MCF 10A (cell line): ENCODE measurements at regions of chr17 and their contacts with region 1.

Region 1: DNA sequence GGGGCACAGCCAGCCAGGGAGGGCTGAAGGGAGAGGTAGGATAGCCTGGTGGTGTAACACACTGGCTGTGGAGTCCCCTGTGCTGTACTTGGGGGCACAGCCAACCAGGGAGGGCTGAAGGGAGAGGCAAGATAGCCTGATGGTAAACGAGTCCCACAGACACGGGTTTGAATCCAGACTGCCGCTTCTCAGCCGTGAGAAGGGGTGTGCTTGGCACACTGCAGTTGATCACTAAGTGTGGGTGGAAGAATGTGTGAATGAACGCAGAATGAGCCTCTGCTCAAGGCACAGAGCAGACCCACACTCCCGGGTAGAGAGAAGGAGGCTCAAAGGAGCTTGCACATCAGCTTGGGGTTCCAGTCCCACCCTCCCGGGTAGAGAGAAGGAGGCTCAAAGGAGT is 71.4 kb downstream of the TIMM22 start:
- DNase-seq: no peak
- H3K4me3 Mint-ChIP-seq: no peak overlapping the region
- H3K27ac Mint-ChIP-seq: no peak overlapping the region
- H3K4me1 Mint-ChIP-seq: peaks cover 8% of the 10 kb centered on the region
- H3K27me3 Mint-ChIP-seq: no peaks in the 10 kb centered on the region
- CTCF ChIP-seq: no peak

Region 2: DNA sequence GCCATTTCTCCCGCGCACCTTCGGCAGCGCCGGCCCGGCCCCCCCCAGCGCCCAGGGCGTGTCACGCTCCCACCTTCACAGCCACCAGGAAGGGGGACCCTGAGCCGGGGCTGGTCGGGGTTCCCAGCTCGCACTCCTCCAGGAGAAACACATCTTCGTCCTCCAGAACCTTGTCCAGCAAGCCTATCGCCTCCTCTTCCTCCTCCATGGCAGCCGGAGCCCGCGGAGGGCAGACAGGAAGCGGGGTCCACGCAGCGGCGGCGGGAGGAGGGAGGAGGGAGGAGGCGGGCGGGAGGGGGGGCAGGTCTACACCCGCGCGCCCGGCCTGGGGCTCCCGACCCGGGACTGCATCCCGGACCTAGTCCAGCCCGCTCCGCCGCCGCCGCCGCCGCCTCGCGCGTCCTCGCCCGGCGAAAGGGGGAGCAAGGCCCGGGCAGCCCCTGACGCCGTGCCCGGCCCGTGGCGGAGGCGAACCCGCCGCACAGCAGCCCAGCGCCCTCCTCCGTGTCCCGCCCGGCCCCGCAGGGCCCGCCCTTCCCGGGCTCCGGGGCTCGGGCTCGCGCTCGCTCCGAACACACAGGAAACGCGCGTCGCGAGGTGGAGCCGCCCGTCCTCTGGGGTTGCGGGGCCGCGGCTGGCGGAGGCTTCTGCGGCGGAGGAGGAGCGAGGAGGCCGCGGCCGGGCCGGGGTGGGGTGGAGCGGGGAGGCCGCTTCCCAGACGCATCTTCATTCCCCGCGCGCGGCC is 40.7 kb after region 1 on chr17:
- CTCF ChIA-PET with region 1: interaction called, 3 read pairs
- POLR2A ChIA-PET with region 1: no interaction called
- intact Hi-C with region 1: loop called (anchors 2 kb)
- DNase-seq: peak; percentile 55
- H3K4me3 Mint-ChIP-seq: peak overlapping the region; percentile 80
- H3K27ac Mint-ChIP-seq: peak overlapping the region; percentile 27
- H3K4me1 Mint-ChIP-seq: peaks cover 33% of the 10 kb centered on the region
- H3K27me3 Mint-ChIP-seq: no peaks in the 10 kb centered on the region
- CTCF ChIP-seq: no peak